ENCODE measurements at regions of chr10 and their contacts with region 1.

Region 1: GRCh38 chr10:95374597-95375209 is 83.9 kb upstream of the PDLIM1 start:
- DNase-seq: peak; percentile 87
- ATAC-seq: peak; percentile 99
- H3K4me3 Mint-ChIP-seq: no peak overlapping the region
- H3K27ac Mint-ChIP-seq: no peak overlapping the region
- H3K4me1 Mint-ChIP-seq: no peaks in the 10 kb centered on the region
- H3K27me3 Mint-ChIP-seq: peaks cover 13% of the 10 kb centered on the region

Region 2: DNA sequence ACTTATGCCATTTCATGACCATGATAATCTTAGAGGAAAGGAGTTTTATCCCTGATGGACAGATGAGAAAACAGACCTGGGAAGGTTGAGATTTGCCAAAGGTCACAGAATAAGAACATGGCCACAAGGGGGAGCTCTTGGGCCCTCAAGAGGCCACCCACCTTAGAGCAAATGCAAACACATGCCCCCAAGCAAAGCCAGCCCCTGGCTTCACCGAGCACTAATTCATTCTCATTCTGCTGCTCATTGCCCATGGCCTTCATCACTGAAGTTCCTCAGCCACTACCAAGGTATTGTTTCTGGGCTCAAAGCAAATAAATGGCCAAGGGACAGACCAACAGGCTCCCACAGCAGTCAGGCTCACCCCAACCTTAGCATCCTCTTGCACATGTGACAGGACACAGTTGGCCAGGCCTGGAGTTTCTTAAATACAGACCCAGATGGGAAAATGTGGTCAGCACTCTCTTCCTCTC is 128.1 kb before region 1 on chr10:
- CTCF ChIA-PET with region 1: interaction called, 24 read pairs
- POLR2A ChIA-PET with region 1: no interaction called
- intact Hi-C with region 1: no loop called
- DNase-seq: peak; percentile 83
- ATAC-seq: peak; percentile 52
- H3K4me3 Mint-ChIP-seq: no peak overlapping the region
- H3K27ac Mint-ChIP-seq: no peak overlapping the region
- H3K4me1 Mint-ChIP-seq: no peaks in the 10 kb centered on the region
- H3K27me3 Mint-ChIP-seq: peaks cover 8% of the 10 kb centered on the region

Region 3: DNA sequence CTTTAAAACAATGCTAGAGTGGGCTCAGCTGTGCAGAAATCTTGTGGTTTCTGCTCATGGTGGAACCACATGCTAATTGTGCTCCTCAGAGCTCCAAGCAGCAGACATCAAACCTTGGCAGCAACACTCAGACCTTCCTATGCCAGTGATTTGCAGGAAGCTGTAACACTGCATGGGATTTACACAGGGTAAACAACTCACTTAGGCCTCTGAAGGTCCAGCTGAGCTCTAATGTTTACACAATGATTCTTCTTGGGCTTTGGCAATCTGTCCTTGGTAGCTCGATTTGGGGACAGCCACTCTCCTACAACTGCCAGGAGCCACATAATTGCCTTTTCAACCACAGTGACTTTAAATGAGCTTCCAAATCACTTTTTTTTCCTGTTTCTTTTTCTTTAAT is 13.8 kb after region 1 on chr10:
- CTCF ChIA-PET with region 1: interaction called, 44 read pairs
- POLR2A ChIA-PET with region 1: no interaction called
- intact Hi-C with region 1: no loop called
- DNase-seq: no peak
- ATAC-seq: no peak
- H3K4me3 Mint-ChIP-seq: no peak overlapping the region
- H3K27ac Mint-ChIP-seq: no peak overlapping the region
- H3K4me1 Mint-ChIP-seq: peaks cover 7% of the 10 kb centered on the region
- H3K27me3 Mint-ChIP-seq: peaks cover 3% of the 10 kb centered on the region

Region 4: DNA sequence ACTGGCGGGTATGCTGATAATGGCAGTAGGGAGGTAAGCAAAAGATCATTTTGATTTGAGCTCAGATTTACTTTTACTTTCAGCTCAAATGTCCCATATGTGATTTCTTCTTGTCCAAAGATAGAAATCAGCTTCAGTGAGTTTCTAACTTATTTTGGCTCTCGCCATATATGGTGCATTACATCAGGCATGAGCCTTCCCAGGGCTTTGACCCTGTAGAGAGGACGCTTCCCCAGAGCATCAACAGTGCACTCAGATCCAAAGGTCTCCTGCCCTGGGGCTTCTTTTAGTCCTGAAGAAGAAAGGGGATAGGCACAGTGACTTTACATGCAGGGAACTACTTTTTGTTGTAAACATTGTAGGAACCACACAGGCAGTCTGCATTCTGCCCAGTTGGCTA is 44.7 kb after region 1 on chr10:
- CTCF ChIA-PET with region 1: no interaction called
- POLR2A ChIA-PET with region 1: no interaction called
- intact Hi-C with region 1: no loop called
- DNase-seq: no peak
- ATAC-seq: no peak
- H3K4me3 Mint-ChIP-seq: no peak overlapping the region
- H3K27ac Mint-ChIP-seq: no peak overlapping the region
- H3K4me1 Mint-ChIP-seq: no peaks in the 10 kb centered on the region
- H3K27me3 Mint-ChIP-seq: no peaks in the 10 kb centered on the region

Region 5: DNA sequence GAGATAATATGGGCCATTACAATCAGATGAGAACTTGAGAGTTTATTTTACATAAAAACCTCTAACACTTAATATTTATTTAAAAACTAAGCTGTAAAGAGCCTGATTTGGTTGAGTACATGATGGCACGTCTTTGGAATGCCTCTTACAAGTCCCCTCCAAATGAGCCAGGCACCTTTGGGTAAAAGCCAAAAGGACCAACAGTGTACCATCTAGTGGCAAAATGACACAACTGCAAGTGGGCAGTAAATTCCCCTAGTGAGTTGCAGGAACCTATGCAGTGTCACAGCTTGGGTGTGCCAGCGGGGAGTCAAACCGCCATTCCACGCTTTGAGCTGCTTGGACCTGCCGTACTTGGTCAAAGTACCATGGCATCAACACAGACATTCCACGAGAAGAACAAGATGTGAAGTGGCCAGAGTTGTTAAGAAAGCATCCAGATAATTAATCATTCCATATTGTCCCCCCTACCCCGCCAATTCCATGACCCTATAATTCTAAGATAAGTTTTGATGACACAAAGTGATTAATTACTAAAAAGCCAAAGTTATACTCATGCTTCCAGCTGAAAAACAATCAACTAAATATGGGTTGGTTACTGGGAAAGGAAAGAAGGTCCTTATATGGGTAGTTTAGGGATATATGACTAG is 71.3 kb after region 1 on chr10:
- CTCF ChIA-PET with region 1: interaction called, 20 read pairs
- POLR2A ChIA-PET with region 1: no interaction called
- intact Hi-C with region 1: loop called in 1 of 2 experiments (anchors 2 kb)
- DNase-seq: peak; percentile 50
- ATAC-seq: peak; percentile 73
- H3K4me3 Mint-ChIP-seq: no peak overlapping the region
- H3K27ac Mint-ChIP-seq: no peak overlapping the region
- H3K4me1 Mint-ChIP-seq: peaks cover 4% of the 10 kb centered on the region
- H3K27me3 Mint-ChIP-seq: peaks cover 6% of the 10 kb centered on the region

Region 6: GRCh38 chr10:95841661-95842498 is 467.2 kb after region 1 on chr10:
- CTCF ChIA-PET with region 1: interaction called, 10 read pairs
- POLR2A ChIA-PET with region 1: no interaction called
- intact Hi-C with region 1: loop called in 1 of 2 experiments (anchors 10 kb)
- DNase-seq: peak; percentile 45
- ATAC-seq: peak; percentile 60
- H3K4me3 Mint-ChIP-seq: no peak overlapping the region
- H3K27ac Mint-ChIP-seq: no peak overlapping the region
- H3K4me1 Mint-ChIP-seq: no peaks in the 10 kb centered on the region
- H3K27me3 Mint-ChIP-seq: peaks cover 3% of the 10 kb centered on the region